Activated CD4-positive, alpha-beta memory T cell treated with anti-CD3 and anti-CD28 coated beads, Interleukin-2, amount 10 ng/mL, durations not matched to agents 7 days and 5 days (primary cell): ENCODE measurements at regions of chr14 and their contacts with region 1.

Region 1: GRCh38 chr14:77376771-77377501 is at the starts of genes SAMD15 and TMED8:
- DNase-seq: peak; percentile 86
- H3K4me3 Mint-ChIP-seq: peak within 1 kb of the TSS; percentile 87
- H3K27ac Mint-ChIP-seq: peak within 1 kb of the TSS; percentile 77
- H3K4me1 Mint-ChIP-seq: peaks cover 40% of the 10 kb centered on the region
- H3K27me3 Mint-ChIP-seq: no peaks in the 10 kb centered on the region
- total RNA-seq, gene SAMD15: 0.25 TPM in 1 of 2 experiments, not detected in the other
- total RNA-seq, gene TMED8: 21.2 to 22.2 TPM

Region 2: GRCh38 chr14:76956316-76957090 is 420.4 kb before region 1 on chr14:
- CTCF ChIA-PET with region 1: no interaction called
- POLR2A ChIA-PET with region 1: no interaction called
- DNase-seq: peak; percentile 94
- H3K4me3 Mint-ChIP-seq: peak overlapping the region; percentile 73
- H3K27ac Mint-ChIP-seq: peak overlapping the region; percentile 96
- H3K4me1 Mint-ChIP-seq: peaks cover 79% of the 10 kb centered on the region
- H3K27me3 Mint-ChIP-seq: peaks cover 4% of the 10 kb centered on the region

Region 3: GRCh38 chr14:77320238-77320935 is 56.5 kb before region 1 on chr14 and contains the start of gene POMT2:
- CTCF ChIA-PET with region 1: interaction called, 17 read pairs
- POLR2A ChIA-PET with region 1: interaction called, 39 read pairs
- DNase-seq: peak; percentile 93
- H3K4me3 Mint-ChIP-seq: peak within 1 kb of the TSS; percentile 93
- H3K27ac Mint-ChIP-seq: peak within 1 kb of the TSS; percentile 97
- H3K4me1 Mint-ChIP-seq: peaks cover 25% of the 10 kb centered on the region
- H3K27me3 Mint-ChIP-seq: no peaks in the 10 kb centered on the region
- total RNA-seq, gene POMT2: 10.5 to 16.1 TPM

Region 4: GRCh38 chr14:77478796-77479195 is 101.9 kb after region 1 on chr14:
- CTCF ChIA-PET with region 1: no interaction called
- POLR2A ChIA-PET with region 1: no interaction called
- DNase-seq: no peak
- H3K4me3 Mint-ChIP-seq: no peak overlapping the region
- H3K27ac Mint-ChIP-seq: no peak overlapping the region
- H3K4me1 Mint-ChIP-seq: no peaks in the 10 kb centered on the region
- H3K27me3 Mint-ChIP-seq: no peaks in the 10 kb centered on the region